Right ventricle myocardium inferior (tissue), 1 donor: ENCODE measurements at regions of chr11 and their contacts with region 1.

Region 1: GRCh38 chr11:70333261-70333660 is 62.8 kb downstream of the PPFIA1 start:
- DNase-seq: no peak
- ATAC-seq: peak; percentile 47

Region 2: GRCh38 chr11:70397983-70398833 is 64.9 kb after region 1 on chr11 and contains the start of gene CTTN:
- intact Hi-C with region 1: loop called (anchors 5 kb)
- DNase-seq: peak; percentile 90
- ATAC-seq: peak; percentile 90
- total RNA-seq, gene CTTN: 166 TPM

Region 3: GRCh38 chr11:70409437-70409836 is 76.2 kb after region 1 on chr11:
- intact Hi-C with region 1: no loop called
- DNase-seq: no peak
- ATAC-seq: no peak

Region 4: GRCh38 chr11:70577948-70578347 is 244.7 kb after region 1 on chr11:
- intact Hi-C with region 1: no loop called
- DNase-seq: no peak
- ATAC-seq: no peak